Posterior cingulate gyrus (tissue), 11 donors: ENCODE measurements at regions of chr11 and their contacts with region 1.

Region 1: DNA sequence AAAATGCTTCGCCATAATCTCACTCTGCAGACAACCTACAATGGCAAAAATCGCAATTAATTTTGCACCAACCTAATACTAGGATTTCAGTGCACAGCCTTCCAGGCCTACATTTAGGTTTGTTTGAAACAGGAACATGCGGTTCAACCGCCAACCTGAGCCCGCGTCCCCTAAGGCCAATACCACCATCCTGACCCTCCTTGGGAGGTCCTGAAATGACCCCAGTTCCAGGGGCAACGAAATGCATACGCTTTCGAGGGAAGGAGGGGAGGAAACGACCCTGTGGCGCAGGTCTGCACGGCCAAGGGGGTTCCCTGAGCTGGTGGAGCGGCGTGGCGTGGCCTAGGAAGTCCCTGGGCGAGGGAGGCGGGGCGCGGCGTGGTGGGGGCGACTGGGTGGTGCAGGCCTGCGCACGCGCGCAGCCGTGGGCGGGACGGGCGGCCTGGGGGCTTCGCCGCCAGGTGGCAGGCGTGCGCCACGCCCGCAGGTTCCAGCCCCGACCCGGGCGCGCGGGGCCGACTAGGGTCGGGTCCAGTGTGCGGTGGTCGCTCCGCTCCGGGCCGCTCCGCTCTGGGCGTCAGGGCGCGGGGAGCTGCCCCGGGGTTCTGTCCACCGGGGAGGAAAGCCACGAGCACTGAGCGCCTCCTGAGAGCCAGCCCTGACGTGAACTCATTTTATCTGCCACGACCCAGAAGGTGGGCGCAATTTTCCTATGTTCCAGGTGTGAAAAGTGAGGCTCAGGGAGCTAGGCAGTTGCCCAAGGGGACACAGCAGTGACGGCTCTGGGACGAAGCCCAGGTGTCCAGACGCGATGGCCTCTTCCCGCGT is 94.1 kb downstream of the SWAP70 start:
- DNase-seq: peak; percentile 61 to 97 (median 82)

Region 2: DNA sequence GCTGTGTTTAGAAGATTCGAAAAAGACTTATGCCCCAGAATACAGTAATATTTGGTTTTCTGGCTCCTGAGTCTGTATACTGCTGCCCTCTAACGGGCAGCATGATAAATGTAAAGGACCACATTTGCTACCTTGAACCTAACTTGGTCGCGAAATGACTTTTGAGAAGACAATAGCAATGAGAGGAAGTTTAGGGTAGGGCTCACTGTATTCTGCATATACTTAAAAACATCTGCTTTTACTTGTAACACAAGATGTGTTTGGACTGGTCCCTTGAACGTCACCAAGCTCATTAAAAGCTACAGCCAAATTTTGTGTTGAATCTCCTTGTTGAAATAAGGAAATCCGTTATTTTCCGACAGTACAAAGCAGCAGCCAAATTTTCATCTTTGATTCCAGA is 215.0 kb after region 1 on chr11:
- intact Hi-C with region 1: loop called (anchors 2 kb)
- DNase-seq: no peak

Region 3: DNA sequence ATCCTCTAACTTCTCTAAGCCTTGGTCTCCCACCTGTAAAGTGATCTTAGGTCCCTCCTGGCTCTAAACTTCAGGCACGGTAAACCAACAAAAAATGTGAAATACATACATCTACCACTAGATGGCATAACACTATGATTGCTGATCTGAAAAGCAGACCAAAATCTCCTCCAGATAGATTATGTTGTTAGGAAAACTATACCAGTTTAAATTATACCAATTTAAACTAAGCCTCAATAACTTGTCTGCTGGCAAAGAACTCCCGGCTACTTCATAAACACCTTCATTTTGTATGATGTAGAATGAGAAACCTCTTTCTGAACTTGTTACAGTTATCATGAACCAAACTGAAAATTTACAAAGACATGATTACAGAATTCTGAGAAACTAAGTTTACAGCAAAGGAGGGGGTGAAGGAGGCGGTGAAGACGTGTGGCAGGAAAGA is 450.1 kb after region 1 on chr11:
- intact Hi-C with region 1: loop called (anchors 10 kb)
- DNase-seq: no peak

Region 4: DNA sequence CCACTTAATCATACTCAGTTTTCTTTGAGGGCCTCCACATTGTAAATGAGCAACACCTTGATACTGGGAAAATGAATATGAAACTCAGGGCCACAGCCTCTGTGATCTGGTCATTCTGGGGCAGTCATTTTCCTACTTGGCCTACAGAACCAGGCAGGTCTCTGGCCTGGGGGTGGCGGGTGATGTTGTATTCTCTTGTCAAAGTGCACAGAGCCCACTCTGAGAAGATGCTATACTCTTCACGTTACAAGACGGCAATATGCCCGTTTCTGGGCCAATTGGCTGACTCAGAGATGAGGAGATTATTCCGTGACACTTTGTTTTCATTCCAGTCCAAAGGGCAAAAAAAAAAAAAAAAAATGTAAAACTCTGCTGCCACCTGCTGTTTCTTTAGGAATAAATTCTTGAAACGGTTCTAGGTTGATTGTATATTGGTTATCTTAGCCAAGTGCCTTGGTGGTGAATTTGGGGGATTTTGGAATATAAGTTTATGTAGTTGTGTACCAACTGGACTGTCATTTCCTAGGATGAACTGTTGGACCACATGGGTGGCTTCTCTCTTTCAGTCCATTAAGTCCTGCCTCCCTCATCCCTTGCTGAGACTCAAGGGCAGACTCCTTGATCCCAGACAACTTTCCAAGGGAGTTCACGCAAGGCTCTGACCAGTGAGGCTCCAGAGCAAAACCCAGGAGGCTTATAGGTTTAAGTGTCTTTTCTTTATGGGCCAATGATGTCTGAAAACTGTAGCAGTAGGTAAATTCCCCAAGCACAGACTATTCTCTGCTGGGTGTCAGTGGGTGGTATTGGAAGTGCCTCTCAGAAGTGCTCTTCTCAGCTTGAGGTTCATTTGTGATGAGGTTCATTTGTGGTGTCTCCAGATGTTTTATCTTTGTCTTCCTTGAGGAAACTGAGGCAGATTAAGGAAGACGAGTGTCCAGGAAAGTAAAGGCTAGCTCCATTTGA is 565.1 kb after region 1 on chr11:
- intact Hi-C with region 1: loop called (anchors 5 kb)
- DNase-seq: no peak